Activated naive CD4-positive, alpha-beta T cell treated with anti-CD3 and anti-CD28 coated beads for 36 hours (primary cell): ENCODE measurements at regions of chr3 and their contacts with region 1.

Region 1: DNA sequence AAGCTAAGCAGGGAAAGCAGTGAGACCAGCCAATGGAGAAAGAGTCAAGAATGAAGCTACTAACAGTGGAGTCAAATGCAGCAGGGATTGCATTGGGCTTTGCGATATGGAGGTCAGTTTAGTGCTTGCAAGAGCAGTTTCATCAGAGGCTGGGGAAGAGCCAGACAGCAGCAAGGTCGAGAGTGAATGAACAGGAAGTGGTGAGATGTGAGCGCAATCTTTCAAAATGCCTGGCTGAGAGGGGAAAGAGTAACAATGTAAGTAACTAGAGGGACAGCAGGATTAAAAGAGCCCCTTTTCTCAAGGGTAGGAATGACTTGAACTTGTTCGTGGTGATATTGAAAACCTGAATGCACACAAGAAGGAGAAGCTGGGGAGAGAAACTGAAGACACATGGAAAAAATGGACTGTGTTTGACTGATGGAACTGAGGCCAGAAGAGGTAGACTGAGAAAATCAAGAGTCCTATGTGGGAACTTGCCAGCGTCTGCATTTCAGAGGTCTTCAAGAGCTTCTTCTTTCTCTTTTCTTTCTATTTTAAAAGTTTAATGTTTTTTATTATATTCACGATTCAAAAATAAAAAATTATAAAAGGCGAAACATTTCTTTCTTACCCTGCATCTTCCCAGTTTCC is 30.6 kb upstream of the GPR160 start:
- DNase-seq: peak; percentile 71
- H3K4me3 Mint-ChIP-seq: peak overlapping the region; percentile 56
- H3K27ac Mint-ChIP-seq: peak overlapping the region; percentile 83
- H3K4me1 Mint-ChIP-seq: peaks cover 44% of the 10 kb centered on the region
- H3K27me3 Mint-ChIP-seq: no peaks in the 10 kb centered on the region

Region 2: DNA sequence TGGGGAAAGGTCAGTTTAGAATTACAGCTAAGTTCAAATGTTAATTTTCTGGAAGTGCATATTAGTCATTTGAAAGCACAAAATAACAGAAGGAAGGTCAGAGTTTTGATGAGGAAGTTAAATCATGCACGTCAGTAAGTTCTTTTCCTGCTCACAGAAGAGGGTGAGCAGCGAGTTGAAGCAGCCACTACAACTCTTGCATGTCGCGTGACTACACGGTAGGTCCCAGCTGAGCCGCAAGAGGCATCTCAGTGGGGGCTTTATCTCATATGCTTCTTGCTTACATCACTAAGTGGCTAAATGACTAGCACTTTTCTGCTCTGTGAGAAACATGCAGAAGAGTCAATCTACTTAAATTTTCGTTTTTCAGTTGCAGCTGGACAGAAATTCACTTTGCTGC is 61.8 kb before region 1 on chr3:
- CTCF ChIA-PET with region 1: no interaction called
- intact Hi-C with region 1: loop called (anchors 1 kb)
- DNase-seq: peak; percentile 84
- H3K4me3 Mint-ChIP-seq: peak overlapping the region; percentile 30
- H3K27ac Mint-ChIP-seq: peak overlapping the region; percentile 78
- H3K4me1 Mint-ChIP-seq: peaks cover 37% of the 10 kb centered on the region
- H3K27me3 Mint-ChIP-seq: no peaks in the 10 kb centered on the region

Region 3: GRCh38 chr3:170021083-170021482 is 13.9 kb after region 1 on chr3:
- CTCF ChIA-PET with region 1: interaction called, 14 read pairs
- intact Hi-C with region 1: loop called (anchors 1 kb)
- DNase-seq: no peak
- H3K4me3 Mint-ChIP-seq: no peak overlapping the region
- H3K27ac Mint-ChIP-seq: no peak overlapping the region
- H3K4me1 Mint-ChIP-seq: peaks cover 21% of the 10 kb centered on the region
- H3K27me3 Mint-ChIP-seq: no peaks in the 10 kb centered on the region

Region 4: GRCh38 chr3:170027233-170028102 is 20.3 kb after region 1 on chr3:
- CTCF ChIA-PET with region 1: interaction called, 3 read pairs
- intact Hi-C with region 1: loop called (anchors 1 kb)
- DNase-seq: peak; percentile 67
- H3K4me3 Mint-ChIP-seq: no peak overlapping the region
- H3K27ac Mint-ChIP-seq: peak overlapping the region; percentile 39
- H3K4me1 Mint-ChIP-seq: peaks cover 34% of the 10 kb centered on the region
- H3K27me3 Mint-ChIP-seq: no peaks in the 10 kb centered on the region

Region 5: DNA sequence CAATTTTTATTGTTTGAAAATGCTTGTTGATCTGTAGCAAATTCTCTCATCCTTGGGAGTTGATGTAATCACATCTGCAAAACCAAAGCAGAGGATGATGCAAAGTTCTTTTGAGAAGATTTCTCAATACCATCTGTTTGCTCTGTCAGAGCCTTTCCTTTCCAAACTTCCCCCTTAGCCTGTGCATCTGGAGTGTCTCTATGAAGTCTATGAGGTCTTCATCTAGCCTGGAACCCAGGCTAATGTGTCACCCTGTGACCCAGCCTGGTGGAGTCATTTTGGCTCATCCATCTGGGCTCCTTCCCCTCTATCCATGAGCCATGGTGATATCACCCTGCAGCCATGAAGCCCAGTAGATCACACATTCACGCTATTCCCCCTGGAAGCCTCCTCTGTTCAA is 701.9 kb after region 1 on chr3:
- CTCF ChIA-PET with region 1: no interaction called
- intact Hi-C with region 1: no loop called
- DNase-seq: no peak
- H3K4me3 Mint-ChIP-seq: no peak overlapping the region
- H3K27ac Mint-ChIP-seq: no peak overlapping the region
- H3K4me1 Mint-ChIP-seq: no peaks in the 10 kb centered on the region
- H3K27me3 Mint-ChIP-seq: peaks cover 19% of the 10 kb centered on the region